Panc1 (cell line): ENCODE measurements at regions of chr3 and their contacts with region 1.

Region 1: GRCh38 chr3:105906836-105907235 is 38.0 kb upstream of the CBLB start:
- DNase-seq: no peak
- ATAC-seq: no peak
- H3K4me3 ChIP-seq: no peak overlapping the region
- H3K27ac ChIP-seq: no peak overlapping the region
- H3K4me1 ChIP-seq: no peaks in the 10 kb centered on the region
- H3K27me3 ChIP-seq: no peaks in the 10 kb centered on the region
- CTCF ChIP-seq: no peak

Region 2: GRCh38 chr3:104349836-104350235 is 1557.0 kb before region 1 on chr3:
- CTCF ChIA-PET with region 1: no interaction called
- POLR2A ChIA-PET with region 1: no interaction called
- in situ Hi-C with region 1: no loop called
- intact Hi-C with region 1: no loop called
- DNase-seq: no peak
- ATAC-seq: no peak
- H3K4me3 ChIP-seq: no peak overlapping the region
- H3K27ac ChIP-seq: no peak overlapping the region
- H3K4me1 ChIP-seq: no peaks in the 10 kb centered on the region
- H3K27me3 ChIP-seq: no peaks in the 10 kb centered on the region
- CTCF ChIP-seq: no peak

Region 3: DNA sequence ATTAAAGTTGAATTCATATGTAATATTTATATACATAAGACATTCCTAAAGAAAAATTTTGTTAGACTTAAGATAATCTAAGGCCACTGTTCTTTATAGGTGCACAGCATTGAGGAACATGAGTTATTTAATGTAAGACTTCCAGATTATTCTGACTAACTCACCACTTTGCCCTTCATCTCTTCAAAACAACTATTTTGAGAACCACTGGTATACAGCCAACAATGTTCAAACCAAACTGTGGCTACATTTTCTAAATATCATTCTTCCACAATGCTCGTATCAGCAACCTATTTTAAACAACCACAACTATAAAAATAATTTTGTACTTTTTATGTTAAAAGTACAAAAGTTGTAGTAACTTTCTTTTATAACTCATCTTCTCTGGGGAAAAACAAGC is 739.9 kb before region 1 on chr3:
- CTCF ChIA-PET with region 1: no interaction called
- POLR2A ChIA-PET with region 1: no interaction called
- in situ Hi-C with region 1: no loop called
- intact Hi-C with region 1: no loop called
- DNase-seq: no peak
- ATAC-seq: no peak
- H3K4me3 ChIP-seq: no peak overlapping the region
- H3K27ac ChIP-seq: no peak overlapping the region
- H3K4me1 ChIP-seq: no peaks in the 10 kb centered on the region
- H3K27me3 ChIP-seq: no peaks in the 10 kb centered on the region
- CTCF ChIP-seq: no peak

Region 4: DNA sequence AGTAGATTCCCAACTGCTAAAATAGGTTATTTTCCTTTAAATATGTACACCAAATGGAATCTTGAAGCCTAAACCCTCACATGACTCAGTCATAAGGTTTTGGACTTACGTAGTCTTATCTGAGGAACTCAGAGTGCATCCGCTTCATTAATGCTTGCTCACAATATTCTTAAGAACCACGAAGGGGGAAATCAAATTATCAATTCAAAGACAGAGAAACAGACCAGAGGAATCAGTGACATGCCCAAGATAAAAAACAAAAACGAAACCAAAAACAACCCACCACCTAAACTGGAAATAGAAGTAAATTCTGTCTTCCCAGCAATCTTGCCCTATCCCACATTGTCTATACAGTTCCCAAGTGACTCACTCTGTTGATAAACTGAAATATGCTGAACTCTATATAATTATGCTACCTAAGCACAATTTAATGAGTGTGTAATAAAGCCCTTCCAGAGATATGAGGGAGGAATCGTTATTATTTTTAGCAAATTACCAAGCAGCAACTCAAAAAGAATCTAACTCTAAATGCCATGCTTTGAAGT is 97.4 kb after region 1 on chr3:
- CTCF ChIA-PET with region 1: no interaction called
- POLR2A ChIA-PET with region 1: no interaction called
- in situ Hi-C with region 1: no loop called
- intact Hi-C with region 1: no loop called
- DNase-seq: no peak
- ATAC-seq: no peak
- H3K4me3 ChIP-seq: no peak overlapping the region
- H3K27ac ChIP-seq: no peak overlapping the region
- H3K4me1 ChIP-seq: no peaks in the 10 kb centered on the region
- H3K27me3 ChIP-seq: no peaks in the 10 kb centered on the region
- CTCF ChIP-seq: no peak

Region 5: GRCh38 chr3:106058475-106058874 is 151.6 kb after region 1 on chr3:
- CTCF ChIA-PET with region 1: no interaction called
- POLR2A ChIA-PET with region 1: no interaction called
- in situ Hi-C with region 1: no loop called
- intact Hi-C with region 1: no loop called
- DNase-seq: no peak
- ATAC-seq: no peak
- H3K4me3 ChIP-seq: no peak overlapping the region
- H3K27ac ChIP-seq: no peak overlapping the region
- H3K4me1 ChIP-seq: no peaks in the 10 kb centered on the region
- H3K27me3 ChIP-seq: no peaks in the 10 kb centered on the region
- CTCF ChIP-seq: no peak

Region 6: DNA sequence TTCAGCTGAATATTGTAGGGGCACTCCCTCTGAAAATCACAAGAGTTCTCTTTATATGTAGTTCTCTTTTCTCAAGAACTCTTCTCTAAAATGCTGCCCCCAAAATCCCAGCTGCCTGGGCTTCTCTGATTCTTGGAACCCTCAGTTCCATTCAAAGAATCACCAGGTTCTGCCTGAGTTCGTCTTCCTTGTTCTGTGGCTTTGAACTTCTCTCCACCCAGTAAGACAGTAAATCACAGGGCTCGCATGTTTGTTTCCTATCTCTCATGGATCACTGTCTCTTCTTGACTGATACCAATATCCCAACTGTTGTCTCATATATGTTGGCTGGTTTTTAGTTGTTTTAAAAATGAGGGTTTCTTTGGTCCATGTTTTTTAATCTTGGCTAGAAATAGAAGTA is 321.4 kb after region 1 on chr3:
- CTCF ChIA-PET with region 1: no interaction called
- POLR2A ChIA-PET with region 1: interaction called, 11 read pairs
- in situ Hi-C with region 1: no loop called
- intact Hi-C with region 1: no loop called
- DNase-seq: no peak
- ATAC-seq: no peak
- H3K4me3 ChIP-seq: no peak overlapping the region
- H3K27ac ChIP-seq: no peak overlapping the region
- H3K4me1 ChIP-seq: no peaks in the 10 kb centered on the region
- H3K27me3 ChIP-seq: no peaks in the 10 kb centered on the region
- CTCF ChIP-seq: no peak